Gastrocnemius medialis (tissue), 4 donors: ENCODE measurements at regions of chr5 and their contacts with region 1.

Region 1: GRCh38 chr5:64768358-64769312 is at the starts of genes CWC27 and SREK1IP1:
- DNase-seq: peak; percentile 74 to 84
- ATAC-seq: peak; percentile 99 to 100
- H3K4me3 ChIP-seq: peak within 1 kb of the TSS; percentile 82 to 88 (median 83)
- H3K27ac ChIP-seq: peak within 1 kb of the TSS; percentile 88 to 91 (median 88)
- H3K4me1 ChIP-seq: peaks cover 31 to 52% of the 10 kb centered on the region in 2 donors
- H3K27me3 ChIP-seq: no peaks in the 10 kb centered on the region
- CTCF ChIP-seq: peak in 3 of 5 experiments; percentile 18 to 36 (median 29)
- POLR2A ChIP-seq: peak; percentile 46 to 60
- total RNA-seq, gene CWC27: 8.4 to 10.7 (median 8.6) TPM
- total RNA-seq, gene SREK1IP1: 2.7 to 7.0 (median 3.9) TPM

Region 2: GRCh38 chr5:64165500-64166200 is 603.0 kb before region 1 on chr5 and contains the start of gene RNF180:
- in situ Hi-C with region 1: no loop called
- intact Hi-C with region 1: loop called (anchors 2 kb)
- DNase-seq: peak; percentile 10 to 37
- ATAC-seq: peak; percentile 81
- H3K4me3 ChIP-seq: peak within 1 kb of the TSS; percentile 69 to 79 (median 76)
- H3K27ac ChIP-seq: peak within 1 kb of the TSS; percentile 57 to 81 (median 70)
- H3K4me1 ChIP-seq: peaks cover 3 to 26% of the 10 kb centered on the region in 2 donors
- H3K27me3 ChIP-seq: no peaks in the 10 kb centered on the region
- CTCF ChIP-seq: no peak
- POLR2A ChIP-seq: peak in 1 of 2 donors; percentile 18
- total RNA-seq, gene RNF180: 3.7 to 14.3 (median 5.2) TPM

Region 3: DNA sequence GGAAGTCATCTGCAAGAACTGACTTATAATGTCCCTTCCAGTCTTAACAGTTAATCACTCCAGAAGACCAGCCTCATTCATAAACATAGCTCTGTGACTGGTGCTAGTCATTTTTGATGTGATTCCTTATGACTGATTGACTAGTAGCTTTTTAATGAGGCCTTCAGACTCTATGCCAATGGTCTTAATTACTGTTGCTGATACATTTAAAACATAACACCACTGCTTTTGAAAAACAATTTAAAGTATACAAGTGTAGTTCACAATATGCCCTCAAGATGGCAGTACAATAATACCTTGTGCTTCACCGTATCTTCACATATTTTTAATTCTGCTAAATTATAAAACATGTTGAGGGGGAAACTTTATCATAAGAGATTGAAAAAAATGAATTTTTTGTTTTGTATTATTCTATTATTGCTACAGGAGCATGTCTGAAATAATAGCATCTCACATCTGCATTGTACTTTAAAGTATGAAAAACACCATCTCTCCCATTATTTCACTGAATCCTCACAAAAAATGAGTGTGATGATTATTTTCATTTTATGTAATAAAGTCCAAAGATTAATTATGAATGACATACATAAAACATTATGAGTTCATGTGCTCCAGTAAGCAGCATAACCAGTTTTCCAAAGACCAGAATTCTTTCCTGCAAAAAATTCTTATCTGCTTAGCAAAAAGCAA is 133.5 kb before region 1 on chr5:
- in situ Hi-C with region 1: no loop called
- intact Hi-C with region 1: loop called (anchors 5 kb)
- DNase-seq: no peak
- ATAC-seq: peak in 1 of 2 donors; percentile 44
- H3K4me3 ChIP-seq: no peak overlapping the region
- H3K27ac ChIP-seq: no peak overlapping the region
- H3K4me1 ChIP-seq: no peaks in the 10 kb centered on the region
- H3K27me3 ChIP-seq: no peaks in the 10 kb centered on the region
- CTCF ChIP-seq: peak; percentile 51 to 78 (median 70)
- POLR2A ChIP-seq: no peak

Region 4: GRCh38 chr5:64690417-64691151 is 78.1 kb before region 1 on chr5 and contains the start of gene SHISAL2B:
- in situ Hi-C with region 1: no loop called
- intact Hi-C with region 1: no loop called
- DNase-seq: no peak
- ATAC-seq: peak; percentile 12 to 14
- H3K4me3 ChIP-seq: peak within 1 kb of the TSS; percentile 46 to 52 (median 50)
- H3K27ac ChIP-seq: no peak within 1 kb of the TSS
- H3K4me1 ChIP-seq: peaks cover 0 to 12% of the 10 kb centered on the region in 2 donors
- H3K27me3 ChIP-seq: peaks cover 5 to 16% (median 9%) of the 10 kb centered on the region in 3 donors
- CTCF ChIP-seq: no peak
- POLR2A ChIP-seq: no peak
- total RNA-seq, gene SHISAL2B: not detected

Region 5: GRCh38 chr5:65562731-65563701 is 794.4 kb after region 1 on chr5 and contains the starts of genes CENPK and PPWD1:
- in situ Hi-C with region 1: no loop called
- intact Hi-C with region 1: loop called (anchors 2 kb)
- DNase-seq: peak; percentile 90 to 91
- ATAC-seq: peak; percentile 100
- H3K4me3 ChIP-seq: peak within 1 kb of the TSS; percentile 65 to 90 (median 80)
- H3K27ac ChIP-seq: peak within 1 kb of the TSS; percentile 76 to 85 (median 82)
- H3K4me1 ChIP-seq: peaks cover 22 to 24% of the 10 kb centered on the region in 2 donors
- H3K27me3 ChIP-seq: no peaks in the 10 kb centered on the region
- CTCF ChIP-seq: no peak
- POLR2A ChIP-seq: peak; percentile 62 to 63
- total RNA-seq, gene CENPK: 0.56 TPM in 1 of 4 donors, not detected in the others
- total RNA-seq, gene PPWD1: 14.1 to 18.8 (median 16.6) TPM

Region 6: GRCh38 chr5:65774346-65774745 is 1005.7 kb after region 1 on chr5:
- in situ Hi-C with region 1: no loop called
- intact Hi-C with region 1: no loop called
- DNase-seq: no peak
- ATAC-seq: peak in 1 of 2 donors; percentile 71
- H3K4me3 ChIP-seq: no peak overlapping the region
- H3K27ac ChIP-seq: no peak overlapping the region
- H3K4me1 ChIP-seq: peaks cover 15 to 28% of the 10 kb centered on the region in 2 donors
- H3K27me3 ChIP-seq: no peaks in the 10 kb centered on the region
- CTCF ChIP-seq: no peak
- POLR2A ChIP-seq: no peak